Thyroid gland (tissue), 4 donors: ENCODE measurements at regions of chr16 and their contacts with region 1.

Region 1: DNA sequence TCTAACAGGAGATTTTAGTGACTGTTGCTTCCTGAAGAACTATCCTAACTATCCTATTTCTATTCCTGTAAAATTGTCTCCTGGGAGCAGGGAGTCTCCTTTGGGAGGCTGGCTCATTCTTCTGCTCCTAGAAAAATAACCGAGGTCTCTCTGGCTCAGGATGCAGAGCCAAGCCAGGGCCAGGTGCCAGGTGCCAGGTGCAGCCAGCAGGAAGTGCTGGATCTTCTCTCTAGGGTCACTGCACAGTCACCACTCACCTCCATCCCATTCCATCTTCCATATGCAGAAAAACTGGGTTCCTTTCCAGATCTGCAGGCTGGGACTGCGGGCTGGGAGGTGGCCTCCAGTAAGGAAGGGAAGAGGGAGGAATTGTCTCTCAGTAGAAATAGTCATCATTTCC is 3.8 kb upstream of the TMC7 start:
- DNase-seq: peak; percentile 29 to 61
- H3K4me3 ChIP-seq: no peak overlapping the region
- H3K27ac ChIP-seq: no peak overlapping the region
- H3K4me1 ChIP-seq: peaks cover 3 to 4% of the 10 kb centered on the region in 2 donors
- H3K27me3 ChIP-seq: no peaks in the 10 kb centered on the region
- CTCF ChIP-seq: no peak
- POLR2A ChIP-seq: no peak

Region 2: GRCh38 chr16:18853694-18854093 is 126.2 kb before region 1 on chr16:
- intact Hi-C with region 1: loop called (anchors 10 kb)
- DNase-seq: no peak
- H3K4me3 ChIP-seq: no peak overlapping the region
- H3K27ac ChIP-seq: no peak overlapping the region
- H3K4me1 ChIP-seq: no peaks in the 10 kb centered on the region
- H3K27me3 ChIP-seq: no peaks in the 10 kb centered on the region
- CTCF ChIP-seq: no peak
- POLR2A ChIP-seq: no peak

Region 3: DNA sequence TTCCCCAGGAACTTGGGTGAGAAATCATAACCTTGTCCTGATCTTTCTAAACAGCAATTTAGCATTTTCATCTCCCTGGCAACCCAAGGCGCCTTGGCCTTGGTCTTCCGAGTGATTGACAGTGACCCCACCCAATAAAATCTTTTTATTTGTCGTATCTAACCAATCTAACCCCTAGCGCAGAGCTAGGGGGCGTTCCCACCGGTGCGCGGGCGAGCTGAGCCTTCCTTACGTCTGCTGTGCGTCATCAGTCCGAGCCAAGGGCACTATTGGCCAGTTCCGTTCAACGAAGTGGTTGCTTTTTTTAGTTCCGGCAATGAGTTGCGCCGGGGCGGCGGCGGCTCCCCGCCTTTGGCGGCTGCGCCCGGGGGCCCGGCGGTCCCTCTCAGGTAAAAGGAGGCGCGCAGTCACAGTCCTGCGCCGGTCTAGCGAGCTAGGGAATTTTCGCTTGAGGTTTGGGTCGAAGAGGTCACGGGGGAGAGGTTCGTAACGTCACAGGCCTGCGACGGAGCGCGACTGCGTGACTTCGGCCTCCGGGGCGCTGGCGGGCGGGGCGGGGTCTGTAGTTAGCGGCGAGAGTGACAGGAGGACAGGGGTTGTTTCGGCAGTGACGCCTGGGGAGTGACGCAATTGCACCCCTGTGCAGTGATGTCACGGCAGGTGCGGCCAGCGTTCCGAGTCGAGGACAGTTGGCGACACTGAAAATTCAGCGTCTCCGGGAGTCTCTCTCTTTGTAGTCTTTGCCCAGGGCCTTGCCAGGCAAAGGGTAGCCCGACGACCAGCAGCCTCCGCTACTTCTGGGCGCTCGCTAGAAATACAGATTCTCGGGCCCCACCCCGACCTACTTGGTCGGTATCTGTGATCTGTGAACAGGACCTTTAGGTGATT is 87.7 kb after region 1 on chr16 and contains the start of gene COQ7:
- intact Hi-C with region 1: no loop called
- DNase-seq: peak; percentile 99
- H3K4me3 ChIP-seq: peak within 1 kb of the TSS; percentile 65 to 100 (median 76)
- H3K27ac ChIP-seq: peak within 1 kb of the TSS; percentile 98 to 100 (median 100)
- H3K4me1 ChIP-seq: peaks cover 9 to 14% of the 10 kb centered on the region in 2 donors
- H3K27me3 ChIP-seq: no peaks in the 10 kb centered on the region
- CTCF ChIP-seq: no peak
- POLR2A ChIP-seq: peak in 1 of 2 donors; percentile 46
- total RNA-seq, gene COQ7: 26.4 to 41.9 (median 38.4) TPM